G401 (cell line): ENCODE measurements at regions of chr6 and their contacts with region 1.

Region 1: GRCh38 chr6:110958329-110959192 is at the start of gene GTF3C6:
- DNase-seq: peak; percentile 93
- total RNA-seq, gene GTF3C6: 38.2 and 43.0 TPM in 2 replicates

Region 2: DNA sequence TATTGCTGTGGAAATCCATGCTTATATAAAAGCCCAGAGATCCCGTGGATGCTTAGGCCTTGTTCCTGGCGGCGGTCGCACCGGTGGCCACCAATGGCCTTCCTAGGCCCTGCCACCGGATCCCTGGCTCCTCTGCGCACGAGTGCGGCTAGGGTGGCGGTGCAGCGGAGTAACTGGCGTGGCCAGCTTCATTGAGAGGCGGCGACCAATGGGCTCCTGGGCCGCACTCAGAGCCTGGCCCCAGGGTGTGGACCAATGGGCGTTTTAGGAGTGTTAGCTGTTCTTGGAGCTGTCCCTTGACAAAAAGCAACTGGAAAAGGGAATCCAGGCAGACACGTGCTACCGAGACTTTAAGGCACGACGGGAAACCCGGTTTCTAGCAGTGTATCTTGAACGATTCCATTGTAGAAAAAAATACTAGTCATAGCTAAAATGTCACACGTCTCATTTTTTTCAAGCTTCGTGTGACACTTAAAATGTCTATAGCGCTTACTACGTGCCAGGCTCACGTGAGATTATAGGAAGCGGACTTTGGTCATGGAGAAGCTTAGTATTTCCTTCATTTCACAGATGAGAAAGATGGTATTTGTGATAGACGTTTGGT is 82.3 kb before region 1 on chr6:
- in situ Hi-C with region 1: loop called (anchors 5 kb)
- DNase-seq: peak; percentile 86

Region 3: GRCh38 chr6:111175109-111175508 is 216.5 kb after region 1 on chr6:
- in situ Hi-C with region 1: no loop called
- DNase-seq: no peak